Sciatic nerve (tissue), 2 donors: ENCODE measurements at regions of chr12 and their contacts with region 1.

Region 1: DNA sequence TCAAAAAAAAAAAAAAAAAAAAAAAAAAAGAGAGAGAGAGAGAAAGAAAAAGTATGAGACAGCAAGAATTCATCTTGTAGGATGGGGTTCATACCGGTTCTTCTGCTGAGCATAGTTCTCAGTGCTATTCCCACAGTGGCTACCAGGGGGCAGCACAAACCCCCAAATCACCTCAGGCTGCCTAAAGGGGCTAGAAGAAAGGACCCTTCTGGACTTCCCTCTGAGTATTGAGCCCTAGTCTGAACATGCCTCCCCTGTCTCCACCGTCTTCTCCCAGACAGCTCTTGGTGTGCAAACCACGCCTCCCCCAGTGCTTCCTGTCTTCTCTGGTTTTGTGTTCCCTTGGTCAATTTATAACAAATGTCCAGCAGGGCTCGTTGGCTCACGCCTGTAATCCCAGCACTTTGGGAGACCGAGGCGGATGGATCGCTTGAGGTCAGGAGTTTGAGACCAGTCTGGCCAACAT is 31.3 kb upstream of the SMUG1 start:
- DNase-seq: peak; percentile 84
- ATAC-seq: peak; percentile 74

Region 2: GRCh38 chr12:54053751-54054741 is 166.1 kb before region 1 on chr12 and contains the start of gene HOXC4:
- intact Hi-C with region 1: no loop called
- DNase-seq: no peak
- ATAC-seq: peak; percentile 83
- total RNA-seq, gene HOXC4: 23.6 TPM

Region 3: DNA sequence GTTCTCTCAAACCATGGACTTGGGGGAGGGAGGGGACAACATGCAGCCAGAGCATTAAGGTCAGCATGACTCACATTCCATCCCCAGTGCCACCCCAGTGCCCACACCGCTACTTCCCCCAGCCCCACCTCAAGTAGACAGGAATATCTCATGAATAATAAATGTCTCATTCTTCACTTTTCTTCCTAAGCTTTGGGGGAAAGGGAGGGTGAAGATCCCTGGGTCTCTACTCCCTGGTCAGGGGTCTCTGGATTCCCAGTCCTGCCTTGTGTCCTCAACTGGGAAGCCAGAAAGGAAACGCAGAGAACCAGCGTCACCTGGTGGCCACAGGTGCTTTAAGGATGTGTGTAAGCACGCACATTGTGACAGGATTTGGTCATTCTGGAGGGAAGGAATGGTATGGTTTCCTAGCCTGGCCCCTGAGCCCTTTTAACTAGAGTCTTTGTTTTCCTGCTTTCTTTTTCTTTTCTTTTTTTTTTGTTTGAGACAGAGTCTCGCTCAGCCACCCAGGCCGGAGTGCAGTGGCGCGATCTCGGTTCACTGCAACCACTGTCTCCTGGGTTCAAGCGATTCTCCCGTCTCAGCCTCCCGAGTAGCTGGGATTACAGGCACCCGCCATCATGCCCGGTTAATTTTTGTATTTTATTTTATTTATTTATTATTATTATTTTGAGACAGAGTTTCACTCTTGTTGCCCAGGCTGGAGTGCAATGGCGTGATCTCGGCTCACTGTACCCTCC is 140.8 kb after region 1 on chr12:
- intact Hi-C with region 1: loop called (anchors 5 kb)
- DNase-seq: peak; percentile 88
- ATAC-seq: no peak